ENCODE measurements at regions of chr5 and their contacts with region 1.

Region 1: GRCh38 chr5:112419986-112420864 is 1.1 kb upstream of the EPB41L4A start:
- DNase-seq: peak; percentile 83 to 92 (median 87)
- ATAC-seq: peak; percentile 94
- H3K4me3 ChIP-seq: peak overlapping the region; percentile 72 to 75
- H3K27ac ChIP-seq: peak overlapping the region; percentile 82 to 87
- H3K4me1 ChIP-seq: peaks cover 0 to 14% of the 10 kb centered on the region in 2 donors
- H3K27me3 ChIP-seq: peaks cover 0 to 68% of the 10 kb centered on the region in 2 donors
- CTCF ChIP-seq: peak; percentile 71 to 78

Region 2: DNA sequence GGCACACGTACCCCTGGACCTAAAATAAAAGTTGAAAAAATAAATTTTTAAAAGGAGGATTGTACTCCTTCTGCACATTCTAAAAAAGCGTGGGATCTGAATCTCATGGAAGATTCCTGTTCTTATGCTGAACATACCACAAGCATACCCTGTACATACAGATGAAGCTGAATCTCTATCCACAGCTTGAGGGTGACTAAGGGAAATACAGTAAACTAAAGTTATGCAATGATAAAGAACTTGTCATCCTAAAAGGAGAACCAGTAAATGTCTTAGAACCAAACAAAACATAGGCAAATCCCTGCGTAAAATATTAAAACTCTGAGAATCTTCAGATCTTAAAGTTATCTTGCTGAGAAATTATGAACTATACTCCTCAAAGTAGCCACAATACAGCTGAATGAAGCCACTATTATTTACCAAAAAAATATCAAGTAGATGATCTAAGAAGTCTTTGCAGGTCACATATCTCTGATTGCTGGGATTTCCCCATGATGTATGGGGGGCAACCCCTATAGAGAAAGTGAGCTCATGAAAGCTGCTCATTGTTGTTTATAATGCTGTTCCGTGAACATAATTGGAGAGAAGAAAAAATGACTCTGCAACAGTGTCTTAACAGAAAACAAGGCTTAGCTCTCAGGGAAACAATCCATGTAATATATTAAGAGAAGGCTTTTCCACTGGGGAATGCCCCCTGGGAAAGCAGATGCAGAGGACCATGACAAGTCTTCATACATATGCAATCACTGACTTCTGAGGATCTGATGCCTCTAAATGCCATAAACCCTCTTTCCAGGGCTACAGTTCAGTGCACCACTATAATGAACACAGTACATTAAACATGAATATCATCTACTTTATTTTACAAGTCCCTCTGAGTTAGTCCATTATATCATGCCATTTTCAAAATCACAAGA is 211.3 kb before region 1 on chr5:
- intact Hi-C with region 1: loop called in 1 of 2 experiments (anchors 10 kb)
- DNase-seq: no peak
- ATAC-seq: no peak
- H3K4me3 ChIP-seq: no peak overlapping the region
- H3K27ac ChIP-seq: no peak overlapping the region
- H3K4me1 ChIP-seq: no peaks in the 10 kb centered on the region
- H3K27me3 ChIP-seq: no peaks in the 10 kb centered on the region
- CTCF ChIP-seq: no peak

Region 3: GRCh38 chr5:112228667-112229066 is 191.6 kb before region 1 on chr5:
- intact Hi-C with region 1: loop called in 1 of 2 experiments (anchors 10 kb)
- DNase-seq: peak; percentile 62 to 88 (median 86)
- ATAC-seq: peak; percentile 99
- H3K4me3 ChIP-seq: no peak overlapping the region
- H3K27ac ChIP-seq: no peak overlapping the region
- H3K4me1 ChIP-seq: peaks cover 7% of the 10 kb centered on the region in 2 donors
- H3K27me3 ChIP-seq: no peaks in the 10 kb centered on the region
- CTCF ChIP-seq: no peak

Region 4: GRCh38 chr5:112475747-112476365 is 55.6 kb after region 1 on chr5:
- intact Hi-C with region 1: no loop called
- DNase-seq: no peak
- ATAC-seq: no peak
- H3K4me3 ChIP-seq: no peak overlapping the region
- H3K27ac ChIP-seq: no peak overlapping the region
- H3K4me1 ChIP-seq: no peaks in the 10 kb centered on the region
- H3K27me3 ChIP-seq: no peaks in the 10 kb centered on the region
- CTCF ChIP-seq: no peak

Measured in left lung (tissue), 14 donors.